Heart right ventricle (tissue), 16 donors: ENCODE measurements at regions of chr1 and their contacts with region 1.

Region 1: GRCh38 chr1:41662061-41662764 is 177.7 kb upstream of the EDN2 start:
- DNase-seq: peak; percentile 71 to 86
- ATAC-seq: peak; percentile 74 to 89 (median 84)
- H3K4me3 ChIP-seq: peak overlapping the region; percentile 53 to 84 (median 68)
- H3K27ac ChIP-seq: peak overlapping the region; percentile 50 to 98 (median 94)
- H3K4me1 ChIP-seq: peaks cover 4 to 66% (median 23%) of the 10 kb centered on the region in 9 donors
- H3K27me3 ChIP-seq: peaks cover 0 to 13% (median 0%) of the 10 kb centered on the region in 7 donors
- CTCF ChIP-seq: no peak

Region 2: GRCh38 chr1:40449684-40450494 is 1212.3 kb before region 1 on chr1 and contains the start of gene ZFP69B:
- intact Hi-C with region 1: loop called in 1 of 10 experiments (anchors 5 kb)
- DNase-seq: peak; percentile 92 to 95
- ATAC-seq: peak; percentile 99 to 100 (median 99)
- H3K4me3 ChIP-seq: peak within 1 kb of the TSS; percentile 33 to 88 (median 78)
- H3K27ac ChIP-seq: peak within 1 kb of the TSS in 9 of 10 donors; percentile 52 to 91 (median 83)
- H3K4me1 ChIP-seq: peaks cover 0 to 17% (median 10%) of the 10 kb centered on the region in 9 donors
- H3K27me3 ChIP-seq: no peaks in the 10 kb centered on the region
- CTCF ChIP-seq: peak in 2 of 9 donors; percentile 34
- total RNA-seq, gene ZFP69B: 0.67 to 2.2 (median 1.2) TPM

Region 3: DNA sequence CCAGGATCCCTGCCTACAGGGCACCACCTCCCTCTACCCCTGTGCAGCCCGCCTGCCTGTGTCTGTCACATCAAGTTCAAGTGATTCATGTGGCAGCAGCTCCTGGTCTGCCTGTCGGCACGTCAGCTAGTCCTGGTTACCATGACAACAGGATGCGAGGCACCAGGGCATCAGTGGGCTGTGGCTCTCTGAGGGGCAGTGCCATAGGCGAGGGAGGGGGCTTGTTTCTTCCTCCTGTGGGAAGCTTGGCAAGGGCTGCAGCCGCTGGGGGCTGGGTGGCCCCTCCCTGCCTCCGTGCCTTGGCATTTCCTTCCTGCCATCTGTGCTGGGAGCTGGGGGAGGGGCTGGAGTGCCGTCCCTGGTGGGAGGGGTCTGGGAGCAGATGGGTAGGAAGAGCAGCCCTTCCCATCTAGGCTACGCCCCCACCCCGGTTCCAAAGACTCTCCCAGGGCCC is 257.9 kb before region 1 on chr1:
- intact Hi-C with region 1: no loop called
- DNase-seq: no peak
- ATAC-seq: peak in 3 of 8 donors; percentile 17 to 46 (median 42)
- H3K4me3 ChIP-seq: no peak overlapping the region
- H3K27ac ChIP-seq: no peak overlapping the region
- H3K4me1 ChIP-seq: peaks cover 0 to 11% (median 6%) of the 10 kb centered on the region in 9 donors
- H3K27me3 ChIP-seq: peaks cover 0 to 21% (median 16%) of the 10 kb centered on the region in 7 donors
- CTCF ChIP-seq: no peak

Region 4: DNA sequence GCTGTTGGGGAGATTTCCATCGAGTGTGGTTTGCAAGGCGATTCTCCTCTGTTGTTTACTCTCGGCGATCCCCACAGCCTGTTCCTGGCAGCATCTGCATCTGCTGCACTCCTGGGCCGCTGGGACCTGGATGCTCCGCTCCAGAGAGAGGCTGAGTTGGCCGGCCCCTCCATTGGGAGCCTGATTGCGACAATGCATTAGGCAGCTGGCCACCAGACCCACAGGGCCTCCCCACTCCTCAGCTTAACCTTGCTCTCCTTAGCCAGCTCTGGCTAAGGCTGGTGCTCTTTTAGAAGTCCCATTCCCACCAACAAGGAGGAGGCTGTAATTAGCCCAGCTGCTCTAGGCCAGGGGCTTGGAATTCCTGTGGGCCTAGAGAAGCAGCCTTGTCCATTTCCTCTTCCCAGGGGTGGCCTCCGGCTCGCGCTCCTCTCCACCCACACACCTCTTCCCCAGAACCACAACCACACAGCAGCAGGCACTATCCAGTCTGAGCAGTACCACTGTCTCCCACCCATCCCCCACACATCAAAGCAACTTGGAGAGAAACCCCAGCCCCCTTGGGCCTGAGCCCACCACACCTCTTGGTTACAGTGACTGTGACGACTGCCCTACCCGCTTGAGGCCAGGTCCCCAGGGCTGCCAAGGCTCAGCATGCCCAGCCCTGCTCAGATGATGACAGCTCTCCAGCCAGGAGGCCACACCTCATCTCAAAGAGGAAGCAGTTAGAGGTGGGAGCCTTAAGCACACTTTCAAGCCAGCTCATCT is 16.1 kb after region 1 on chr1:
- intact Hi-C with region 1: loop called in 1 of 10 experiments (anchors 1 kb)
- DNase-seq: peak; percentile 43 to 77
- ATAC-seq: peak in 7 of 8 donors; percentile 25 to 56 (median 43)
- H3K4me3 ChIP-seq: no peak overlapping the region
- H3K27ac ChIP-seq: peak overlapping the region in 5 of 10 donors; percentile 17 to 50 (median 47)
- H3K4me1 ChIP-seq: peaks cover 11 to 54% (median 38%) of the 10 kb centered on the region in 9 donors
- H3K27me3 ChIP-seq: no peaks in the 10 kb centered on the region
- CTCF ChIP-seq: no peak

Region 5: DNA sequence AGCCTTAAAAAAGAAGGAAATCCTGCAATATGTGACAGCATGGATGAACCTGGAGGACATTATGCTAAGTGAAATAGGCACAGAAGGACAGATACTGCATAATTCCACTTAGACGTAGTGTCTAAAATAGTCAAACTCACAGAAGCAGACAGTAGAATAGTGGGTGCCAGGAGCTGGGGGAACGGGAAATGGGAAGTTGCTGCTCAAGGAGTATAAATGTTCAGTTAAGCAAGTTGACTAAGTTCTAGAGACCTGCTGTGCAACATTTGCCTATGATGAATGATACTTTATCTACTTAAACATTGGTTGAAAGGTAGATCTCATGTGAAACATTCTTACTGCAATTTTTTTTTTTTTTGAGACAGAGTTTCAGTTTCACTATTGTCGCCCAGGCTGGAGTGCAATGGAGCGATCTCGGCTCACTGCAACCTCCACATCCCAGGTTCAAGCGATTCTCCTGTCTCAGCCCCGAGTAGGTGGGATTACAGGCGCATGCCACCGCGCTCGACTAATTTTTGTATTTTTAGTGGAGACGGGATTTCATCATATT is 58.7 kb after region 1 on chr1:
- intact Hi-C with region 1: loop called in 1 of 10 experiments (anchors 5 kb)
- DNase-seq: no peak
- ATAC-seq: no peak
- H3K4me3 ChIP-seq: no peak overlapping the region
- H3K27ac ChIP-seq: no peak overlapping the region
- H3K4me1 ChIP-seq: peaks cover 0 to 51% (median 27%) of the 10 kb centered on the region in 9 donors
- H3K27me3 ChIP-seq: no peaks in the 10 kb centered on the region
- CTCF ChIP-seq: no peak

Region 6: GRCh38 chr1:41739061-41739955 is 77.1 kb after region 1 on chr1:
- intact Hi-C with region 1: loop called in 1 of 10 experiments (anchors 5 kb)
- DNase-seq: peak; percentile 69 to 75
- ATAC-seq: peak; percentile 69 to 86 (median 76)
- H3K4me3 ChIP-seq: peak overlapping the region in 2 of 10 donors; percentile 10 to 34
- H3K27ac ChIP-seq: peak overlapping the region in 5 of 10 donors; percentile 2 to 86 (median 50)
- H3K4me1 ChIP-seq: peaks cover 0 to 75% (median 18%) of the 10 kb centered on the region in 9 donors
- H3K27me3 ChIP-seq: no peaks in the 10 kb centered on the region
- CTCF ChIP-seq: no peak

Region 7: GRCh38 chr1:41765152-41765551 is 102.9 kb after region 1 on chr1:
- intact Hi-C with region 1: loop called in 2 of 10 experiments (anchors 5 kb)
- DNase-seq: no peak
- ATAC-seq: peak; percentile 45 to 72 (median 56)
- H3K4me3 ChIP-seq: no peak overlapping the region
- H3K27ac ChIP-seq: peak overlapping the region in 6 of 10 donors; percentile 2 to 74 (median 40)
- H3K4me1 ChIP-seq: peaks cover 3 to 60% (median 39%) of the 10 kb centered on the region in 9 donors
- H3K27me3 ChIP-seq: no peaks in the 10 kb centered on the region
- CTCF ChIP-seq: no peak

Region 8: DNA sequence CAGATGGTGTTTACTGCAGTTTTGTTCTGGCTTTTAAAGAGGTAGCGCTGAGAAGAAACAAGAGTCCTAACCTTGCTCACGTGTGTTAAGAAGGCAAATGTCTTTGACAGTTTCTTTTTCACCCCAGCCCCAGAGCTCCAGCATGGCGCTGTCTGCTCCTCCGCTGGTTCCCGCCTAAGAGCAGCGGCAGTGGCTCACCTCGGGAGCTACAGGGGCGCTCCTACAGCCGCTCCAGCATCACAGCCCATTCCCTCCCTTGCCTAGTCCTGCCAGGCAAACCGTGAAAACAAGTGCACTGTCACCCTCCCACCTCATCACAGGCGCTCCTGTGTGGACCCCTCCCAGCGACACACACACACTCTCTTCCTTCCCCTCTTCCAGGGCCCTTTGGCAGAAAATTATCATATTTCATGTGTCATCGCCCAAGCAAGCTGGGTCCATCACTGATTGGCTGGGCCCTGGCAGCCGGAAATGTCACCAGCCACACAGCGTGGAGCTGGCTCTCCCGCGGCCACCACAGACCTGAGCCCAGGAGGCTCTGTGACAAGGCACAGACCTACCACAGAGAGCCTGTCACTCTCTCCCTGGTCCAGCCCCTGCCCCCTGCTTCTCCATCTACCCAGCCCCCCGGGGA is 257.7 kb after region 1 on chr1:
- intact Hi-C with region 1: loop called in 1 of 10 experiments (anchors 10 kb)
- DNase-seq: peak; percentile 19 to 60
- ATAC-seq: peak; percentile 74 to 88 (median 77)
- H3K4me3 ChIP-seq: peak overlapping the region in 8 of 10 donors; percentile 5 to 66 (median 30)
- H3K27ac ChIP-seq: peak overlapping the region in 4 of 10 donors; percentile 21 to 66 (median 28)
- H3K4me1 ChIP-seq: peaks cover 8 to 57% (median 34%) of the 10 kb centered on the region in 9 donors
- H3K27me3 ChIP-seq: peaks cover 0 to 38% (median 0%) of the 10 kb centered on the region in 7 donors
- CTCF ChIP-seq: no peak